ENCODE measurements at regions of chr3 and their contacts with region 1.

Region 1: GRCh38 chr3:24264748-24265158 is 229.9 kb downstream of the THRB start:
- DNase-seq: peak; percentile 33
- H3K4me3 ChIP-seq: no peak overlapping the region
- CTCF ChIP-seq: peak; percentile 75

Region 2: GRCh38 chr3:24299806-24300626 is 35.3 kb after region 1 on chr3:
- in situ Hi-C with region 1: loop called (anchors 5 kb)
- DNase-seq: no peak
- H3K4me3 ChIP-seq: no peak overlapping the region
- CTCF ChIP-seq: no peak

Region 3: GRCh38 chr3:24494618-24495325 is 230.0 kb after region 1 on chr3 and contains the start of gene THRB:
- in situ Hi-C with region 1: no loop called
- DNase-seq: no peak
- H3K4me3 ChIP-seq: peak within 1 kb of the TSS; percentile 60
- CTCF ChIP-seq: peak; percentile 24

Region 4: DNA sequence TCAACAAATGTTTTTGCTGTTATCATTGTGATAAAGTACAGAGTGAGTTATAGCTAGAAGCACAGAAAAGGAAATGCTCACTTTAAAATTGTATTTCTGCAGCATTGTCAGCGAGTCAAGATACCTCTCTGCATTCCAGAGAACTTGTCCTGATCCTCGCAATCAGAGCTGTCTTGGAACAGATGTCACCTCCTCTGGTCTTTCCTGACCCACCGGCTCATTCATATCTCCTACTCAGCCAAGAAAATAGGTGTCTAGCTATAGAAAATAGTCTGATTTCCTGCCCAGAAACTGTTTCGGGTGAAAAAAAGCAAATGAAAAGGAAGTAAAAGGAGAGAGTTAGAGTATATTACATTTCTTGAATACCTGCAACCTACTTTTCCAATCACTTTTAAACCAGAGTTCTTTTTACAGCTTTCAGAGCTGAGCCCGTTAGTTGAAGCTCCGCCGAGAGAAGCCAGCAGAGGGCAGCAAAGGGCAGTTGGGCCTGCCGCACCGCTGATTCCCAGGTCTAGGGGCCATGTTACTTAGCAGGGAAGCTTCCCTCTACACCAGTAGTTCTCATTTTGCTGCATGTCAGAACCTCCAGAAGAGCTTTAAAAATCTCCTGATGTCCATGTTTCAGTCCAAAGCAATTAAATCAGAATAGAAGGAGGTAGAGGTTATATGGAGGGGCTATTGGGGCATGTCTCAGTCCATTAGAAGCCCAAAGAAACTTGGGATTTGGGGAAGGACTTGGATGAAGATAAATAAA is 415.6 kb after region 1 on chr3:
- in situ Hi-C with region 1: loop called (anchors 10 kb)
- DNase-seq: peak; percentile 16
- H3K4me3 ChIP-seq: no peak overlapping the region
- CTCF ChIP-seq: peak; percentile 93

Measured in astrocyte of the cerebellum (primary cell).